ENCODE measurements at regions of chr3 and their contacts with region 1.

Region 1: GRCh38 chr3:114056130-114057010 is at the starts of genes CCDC191 and QTRT2:
- DNase-seq: peak; percentile 96 to 100
- H3K4me3 ChIP-seq: peak within 1 kb of the TSS; percentile 73 to 80
- H3K27ac ChIP-seq: peak within 1 kb of the TSS; percentile 61 to 68
- H3K4me1 ChIP-seq: peaks cover 8% of the 10 kb centered on the region in 2 donors
- H3K27me3 ChIP-seq: no peaks in the 10 kb centered on the region
- CTCF ChIP-seq: no peak
- total RNA-seq, gene CCDC191: 0.21 TPM
- total RNA-seq, gene QTRT2: 9.5 TPM

Region 2: DNA sequence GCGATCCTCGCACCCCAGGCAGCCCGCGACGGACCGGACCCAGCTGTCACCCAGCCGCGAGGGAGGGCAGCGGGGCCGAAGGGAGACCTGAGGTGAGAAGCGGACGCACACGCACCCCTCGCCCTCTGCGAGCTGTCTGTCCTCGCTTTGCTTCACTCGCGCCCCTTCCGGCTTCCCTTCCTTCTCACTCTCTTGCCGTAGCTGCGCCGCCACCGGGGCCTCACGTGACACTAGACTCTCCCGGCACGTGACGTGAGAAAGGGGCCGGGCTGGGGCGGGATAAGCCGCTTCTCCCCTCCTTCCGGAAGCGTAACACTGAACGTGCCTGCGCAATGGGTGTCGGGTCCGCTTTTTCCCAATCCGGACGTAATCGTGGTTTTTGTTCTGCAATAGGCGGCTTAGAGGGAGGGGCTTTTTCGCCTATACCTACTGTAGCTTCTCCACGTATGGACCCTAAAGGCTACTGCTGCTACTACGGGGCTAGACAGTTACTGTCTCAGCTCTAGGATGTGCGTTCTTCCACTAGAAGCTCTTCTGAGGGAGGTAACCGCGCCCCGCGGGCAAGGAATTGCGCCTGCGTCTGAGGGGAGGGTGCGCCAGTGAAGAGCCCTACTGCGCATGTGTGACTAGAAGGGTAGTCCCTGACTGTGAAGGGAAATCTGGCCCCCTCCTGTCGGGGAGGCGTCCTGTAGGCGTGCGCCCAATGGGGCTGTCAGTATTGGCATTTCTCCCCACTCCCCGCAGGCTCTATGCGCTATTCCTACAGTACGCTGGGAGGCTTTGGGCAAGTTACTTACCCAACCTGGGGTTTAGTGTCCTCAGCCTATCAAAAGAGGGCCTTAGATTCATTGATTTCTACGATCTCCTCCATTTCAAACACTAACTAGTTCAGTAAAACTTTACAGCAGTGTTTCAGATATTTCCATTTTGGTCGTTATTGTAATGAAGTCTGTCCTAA is 1494.4 kb before region 1 on chr3 and contains the starts of genes ATG3 and SLC35A5:
- intact Hi-C with region 1: loop called (anchors 5 kb)
- DNase-seq: peak; percentile 95 to 100
- H3K4me3 ChIP-seq: peak within 1 kb of the TSS; percentile 70 to 73
- H3K27ac ChIP-seq: peak within 1 kb of the TSS; percentile 95 to 98
- H3K4me1 ChIP-seq: peaks cover 8 to 17% of the 10 kb centered on the region in 2 donors
- H3K27me3 ChIP-seq: no peaks in the 10 kb centered on the region
- CTCF ChIP-seq: peak in 1 of 3 experiments; percentile 5
- total RNA-seq, gene ATG3: 73.3 TPM
- total RNA-seq, gene SLC35A5: 20.8 TPM

Region 3: GRCh38 chr3:113514265-113514769 is 542.1 kb before region 1 on chr3:
- intact Hi-C with region 1: loop called (anchors 10 kb)
- DNase-seq: no peak
- H3K4me3 ChIP-seq: peak overlapping the region; percentile 56 to 84
- H3K27ac ChIP-seq: peak overlapping the region; percentile 76 to 81
- H3K4me1 ChIP-seq: no peaks in the 10 kb centered on the region
- H3K27me3 ChIP-seq: no peaks in the 10 kb centered on the region
- CTCF ChIP-seq: no peak

Region 4: DNA sequence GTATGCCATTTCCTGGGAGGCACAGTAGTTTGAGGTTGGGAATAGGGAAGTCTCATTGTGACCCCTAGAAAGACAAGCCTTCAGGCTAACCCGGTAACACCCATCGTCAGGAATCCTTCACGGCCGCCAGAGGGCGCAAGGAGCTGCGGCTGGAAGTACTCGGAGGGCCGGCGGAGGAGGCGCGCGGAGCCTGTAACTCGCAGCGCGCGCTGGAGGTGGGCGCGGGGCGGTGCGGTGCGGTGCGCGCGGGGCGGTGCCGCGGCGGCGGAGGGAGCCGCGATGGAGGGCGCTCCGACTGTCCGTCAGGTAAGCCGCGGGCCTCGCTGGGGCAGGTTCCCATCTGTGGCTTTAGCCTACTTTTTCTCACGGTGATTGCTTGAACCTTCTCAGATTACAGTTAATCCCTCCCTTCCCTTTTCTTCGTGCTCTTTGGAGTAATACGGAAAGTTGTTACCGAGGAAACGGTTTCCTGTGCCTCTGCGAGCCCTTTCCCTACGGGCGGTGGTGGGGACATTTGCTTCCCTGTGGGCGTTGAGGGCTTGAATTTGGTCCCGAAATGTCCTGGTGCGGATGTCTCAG is 217.7 kb before region 1 on chr3 and contains the start of gene GRAMD1C:
- intact Hi-C with region 1: loop called (anchors 5 kb)
- DNase-seq: peak; percentile 32 to 92
- H3K4me3 ChIP-seq: peak within 1 kb of the TSS; percentile 65 to 71
- H3K27ac ChIP-seq: peak within 1 kb of the TSS; percentile 45 to 70
- H3K4me1 ChIP-seq: peaks cover 0 to 3% of the 10 kb centered on the region in 2 donors
- H3K27me3 ChIP-seq: no peaks in the 10 kb centered on the region
- CTCF ChIP-seq: peak; percentile 75 to 83 (median 80)
- total RNA-seq, gene GRAMD1C: 0.21 TPM

Region 5: DNA sequence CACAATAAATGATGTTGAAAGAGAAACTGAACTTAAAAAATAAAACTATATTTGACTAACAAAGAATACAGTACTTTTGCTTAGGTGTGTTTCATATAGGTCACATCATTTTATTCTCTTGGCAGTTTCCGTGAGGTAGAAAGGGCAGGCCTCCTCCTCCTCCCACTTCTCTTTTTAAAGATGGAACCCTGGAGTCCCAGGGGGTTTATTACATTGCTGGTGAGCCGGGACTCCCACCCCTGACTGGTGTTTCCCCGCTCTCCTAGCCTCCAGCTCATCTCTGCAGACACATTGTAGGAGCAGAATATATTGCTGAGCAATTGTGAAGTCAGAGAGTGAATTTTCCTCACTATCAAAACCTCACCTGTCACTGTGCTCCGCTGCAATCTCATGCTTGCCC is 78.5 kb before region 1 on chr3:
- intact Hi-C with region 1: no loop called
- DNase-seq: no peak
- H3K4me3 ChIP-seq: no peak overlapping the region
- H3K27ac ChIP-seq: no peak overlapping the region
- H3K4me1 ChIP-seq: no peaks in the 10 kb centered on the region
- H3K27me3 ChIP-seq: no peaks in the 10 kb centered on the region
- CTCF ChIP-seq: no peak

Region 6: DNA sequence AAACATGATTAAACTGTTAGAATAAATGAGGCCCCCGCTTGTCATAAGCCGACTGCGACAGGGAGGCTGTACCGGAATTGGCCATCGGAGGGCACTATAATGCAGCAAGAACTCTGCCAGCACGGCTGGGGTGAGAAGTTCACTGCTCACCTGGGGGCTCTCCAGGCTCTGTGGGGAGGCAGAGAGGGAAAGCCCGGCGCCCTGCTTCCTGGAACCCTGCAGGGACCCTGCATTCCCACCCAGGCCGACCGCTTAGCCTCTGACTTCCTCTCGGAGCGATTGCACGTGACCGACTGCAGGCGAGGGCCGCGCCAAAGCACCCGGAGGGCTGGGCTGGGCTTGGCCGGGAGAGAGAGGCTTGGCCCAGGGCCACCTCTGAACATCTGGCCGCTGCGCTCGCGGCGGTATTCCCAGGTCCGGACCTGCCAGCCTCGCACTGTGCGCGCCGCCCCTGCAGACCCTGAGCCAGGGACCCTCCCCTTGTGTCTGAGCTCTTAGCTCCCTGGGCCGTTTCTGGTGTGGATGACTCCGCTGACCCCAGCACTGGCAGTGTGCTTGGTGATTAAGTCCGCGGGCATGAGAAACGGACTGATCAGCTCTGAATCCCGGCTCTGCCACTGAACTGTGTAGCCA is 96.3 kb after region 1 on chr3:
- intact Hi-C with region 1: loop called (anchors 5 kb)
- DNase-seq: peak in 1 of 2 donors; percentile 84
- H3K4me3 ChIP-seq: peak overlapping the region; percentile 47 to 68
- H3K27ac ChIP-seq: peak overlapping the region; percentile 9 to 61
- H3K4me1 ChIP-seq: peaks cover 0 to 7% of the 10 kb centered on the region in 2 donors
- H3K27me3 ChIP-seq: no peaks in the 10 kb centered on the region
- CTCF ChIP-seq: peak; percentile 66 to 91 (median 86)

Measured in ascending aorta (tissue), 2 donors.